ENCODE measurements at regions of chr11 and their contacts with region 1.

Region 1: DNA sequence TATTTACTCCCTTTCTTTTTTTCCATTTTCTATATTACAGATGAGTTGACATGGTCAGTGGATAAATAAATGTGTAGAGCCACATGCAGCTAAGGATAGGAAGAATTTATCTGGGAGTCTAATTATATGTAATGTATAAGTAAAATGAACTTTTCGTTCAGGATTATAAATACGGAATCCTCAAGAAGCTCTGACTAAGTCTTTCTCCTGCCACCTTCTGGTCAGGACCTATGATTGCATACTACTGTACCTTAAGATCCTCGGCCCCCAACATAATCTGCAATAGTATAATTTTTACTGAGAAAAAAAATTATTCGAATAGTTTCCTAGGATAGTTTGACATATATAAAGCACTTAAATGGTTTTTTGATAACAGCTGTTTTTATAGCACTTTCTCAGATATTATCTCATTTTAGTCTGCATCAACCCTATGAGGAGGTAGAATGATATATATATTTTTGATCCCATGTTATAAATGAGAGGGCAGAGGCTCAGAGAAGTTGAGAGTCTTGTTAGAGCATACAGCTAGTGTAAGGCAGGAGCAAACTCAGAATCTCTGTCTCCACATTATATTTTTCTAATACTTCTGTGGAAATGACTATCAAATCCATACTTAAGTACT is 36.1 kb downstream of the CCDC90B start:
- DNase-seq: peak in 4 of 9 experiments; percentile 11 to 72 (median 40)
- ATAC-seq: peak; percentile 76
- H3K4me3 ChIP-seq: no peak overlapping the region
- H3K4me3 Mint-ChIP-seq: no peak overlapping the region
- H3K27ac ChIP-seq: no peak overlapping the region
- H3K27ac Mint-ChIP-seq: no peak overlapping the region
- H3K4me1 ChIP-seq: no peaks in the 10 kb centered on the region
- H3K4me1 Mint-ChIP-seq: peaks cover 3% of the 10 kb centered on the region
- H3K27me3 ChIP-seq: no peaks in the 10 kb centered on the region
- H3K27me3 Mint-ChIP-seq: no peaks in the 10 kb centered on the region
- CTCF ChIP-seq: peak; percentile 86

Region 2: DNA sequence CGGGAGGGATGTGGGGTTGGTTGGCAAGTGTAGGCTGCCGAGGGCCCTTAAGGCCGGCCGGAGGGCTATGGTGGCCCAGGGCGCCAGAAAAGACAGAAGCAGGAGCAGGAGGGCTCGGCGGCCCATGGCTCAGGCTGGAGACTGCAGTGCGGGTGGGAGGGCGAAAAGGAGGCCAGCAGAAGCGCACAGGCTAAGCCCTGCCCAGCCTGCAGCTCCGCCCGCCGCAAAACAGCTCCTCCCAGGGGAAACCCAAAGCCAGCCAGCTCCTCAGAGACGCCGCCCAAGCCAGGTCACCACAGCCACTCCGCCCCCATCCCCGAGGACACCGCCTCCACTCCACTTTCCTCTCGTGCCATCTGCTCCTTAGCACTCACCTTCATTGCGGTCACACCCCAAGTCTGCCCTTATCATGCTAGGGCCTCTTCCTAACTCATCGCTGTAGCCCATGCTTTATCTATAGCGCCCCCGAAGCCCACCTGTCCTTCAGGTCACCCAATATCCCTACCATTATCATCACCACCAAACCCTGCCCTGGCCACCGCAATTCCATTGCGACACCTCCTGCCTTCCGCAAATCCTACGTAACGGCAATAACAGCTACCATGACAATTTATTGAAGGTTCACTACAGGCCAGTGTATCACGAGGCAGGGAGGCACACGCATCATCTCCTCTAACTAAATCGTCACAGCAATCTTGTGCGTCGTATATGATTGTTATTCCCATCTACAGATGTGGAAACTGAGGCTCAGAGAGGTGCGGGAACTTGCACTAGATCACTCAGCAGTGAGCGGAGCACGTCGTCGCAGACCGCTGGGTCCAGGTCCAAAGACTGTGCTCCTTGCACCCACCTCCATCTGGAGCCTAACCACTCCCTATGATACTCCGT is 349.6 kb before region 1 on chr11 and contains the start of gene PRCP:
- CTCF ChIA-PET with region 1: interaction called, 26 read pairs
- POLR2A ChIA-PET with region 1: interaction called, 4 read pairs
- intact Hi-C with region 1: loop called in 1 of 2 experiments (anchors 1 kb)
- DNase-seq: peak; percentile 84 to 96 (median 92)
- ATAC-seq: peak; percentile 69
- H3K4me3 ChIP-seq: peak within 1 kb of the TSS; percentile 76 to 93
- H3K4me3 Mint-ChIP-seq: peak within 1 kb of the TSS; percentile 99
- H3K27ac ChIP-seq: peak within 1 kb of the TSS; percentile 94 to 96
- H3K27ac Mint-ChIP-seq: peak within 1 kb of the TSS; percentile 100
- H3K4me1 ChIP-seq: peaks cover 26% of the 10 kb centered on the region
- H3K4me1 Mint-ChIP-seq: peaks cover 48% of the 10 kb centered on the region
- H3K27me3 ChIP-seq: no peaks in the 10 kb centered on the region
- H3K27me3 Mint-ChIP-seq: no peaks in the 10 kb centered on the region
- CTCF ChIP-seq: no peak
- total RNA-seq, gene PRCP: 23.9 to 27.8 TPM

Region 3: GRCh38 chr11:82988936-82989627 is 261.0 kb before region 1 on chr11:
- CTCF ChIA-PET with region 1: interaction called, 3 read pairs
- POLR2A ChIA-PET with region 1: no interaction called
- intact Hi-C with region 1: loop called in 1 of 2 experiments (anchors 5 kb)
- DNase-seq: no peak
- ATAC-seq: no peak
- H3K4me3 ChIP-seq: no peak overlapping the region
- H3K4me3 Mint-ChIP-seq: no peak overlapping the region
- H3K27ac ChIP-seq: no peak overlapping the region
- H3K27ac Mint-ChIP-seq: peak overlapping the region; percentile 8
- H3K4me1 ChIP-seq: peaks cover 3% of the 10 kb centered on the region
- H3K4me1 Mint-ChIP-seq: peaks cover 28% of the 10 kb centered on the region
- H3K27me3 ChIP-seq: no peaks in the 10 kb centered on the region
- H3K27me3 Mint-ChIP-seq: no peaks in the 10 kb centered on the region
- CTCF ChIP-seq: no peak

Region 4: DNA sequence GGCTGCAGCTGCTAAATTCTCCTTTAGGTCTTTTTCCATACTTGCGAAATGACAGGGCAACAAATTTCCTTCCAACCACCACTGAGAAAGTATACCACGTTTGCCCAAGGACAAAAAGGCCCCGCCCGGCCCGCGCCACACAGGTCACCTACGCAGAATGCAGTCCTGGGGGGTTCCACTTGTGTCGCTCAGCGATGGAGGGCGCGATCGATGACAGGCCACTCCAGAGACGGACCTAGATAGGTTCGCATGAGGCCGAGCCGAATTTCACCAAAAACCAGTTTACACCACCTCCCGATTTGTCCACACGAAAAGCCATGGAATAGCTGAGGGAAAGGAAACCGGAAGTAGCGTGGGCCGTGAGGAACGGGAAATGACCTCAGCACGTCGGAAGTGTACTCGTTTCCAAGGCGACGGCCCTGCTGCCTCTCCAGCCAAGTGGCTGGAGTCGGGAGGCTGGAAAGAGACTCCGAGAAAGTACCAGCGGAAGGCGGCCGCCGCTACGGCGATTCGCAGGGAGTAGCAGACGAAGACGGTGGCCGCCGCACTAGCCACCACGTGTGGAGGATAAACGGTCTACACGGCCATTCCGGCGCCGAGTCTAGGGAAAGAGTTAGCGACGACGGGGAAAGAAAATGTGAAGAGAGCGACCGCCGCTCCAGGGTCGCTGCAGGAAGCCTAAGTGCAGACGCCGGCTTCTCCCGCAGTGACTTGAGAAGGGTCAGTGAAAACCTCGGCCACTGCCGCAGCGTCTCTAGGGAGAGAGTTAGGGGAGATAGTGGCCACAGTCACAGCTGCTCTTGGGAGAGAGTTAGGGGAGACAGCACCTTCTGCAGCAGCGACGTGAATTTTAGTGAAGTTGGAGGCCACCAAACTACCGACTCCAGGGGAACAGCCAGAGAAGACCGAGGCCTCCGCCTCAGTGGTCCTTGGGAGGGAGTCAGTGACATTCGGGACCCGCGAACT is 56.5 kb before region 1 on chr11 and contains the start of gene ANKRD42:
- CTCF ChIA-PET with region 1: interaction called, 7 read pairs
- POLR2A ChIA-PET with region 1: interaction called, 3 read pairs
- intact Hi-C with region 1: loop called in 1 of 2 experiments (anchors 2 kb)
- DNase-seq: peak; percentile 53 to 96 (median 86)
- ATAC-seq: peak; percentile 67
- H3K4me3 ChIP-seq: peak within 1 kb of the TSS; percentile 70 to 94
- H3K4me3 Mint-ChIP-seq: peak within 1 kb of the TSS; percentile 100
- H3K27ac ChIP-seq: peak within 1 kb of the TSS; percentile 97 to 98
- H3K27ac Mint-ChIP-seq: peak within 1 kb of the TSS; percentile 100
- H3K4me1 ChIP-seq: peaks cover 30% of the 10 kb centered on the region
- H3K4me1 Mint-ChIP-seq: peaks cover 50% of the 10 kb centered on the region
- H3K27me3 ChIP-seq: no peaks in the 10 kb centered on the region
- H3K27me3 Mint-ChIP-seq: no peaks in the 10 kb centered on the region
- CTCF ChIP-seq: no peak
- total RNA-seq, gene ANKRD42: 11.4 to 12.7 TPM

Region 5: GRCh38 chr11:83336993-83337392 is 86.9 kb after region 1 on chr11:
- CTCF ChIA-PET with region 1: no interaction called
- POLR2A ChIA-PET with region 1: no interaction called
- intact Hi-C with region 1: no loop called
- DNase-seq: no peak
- ATAC-seq: no peak
- H3K4me3 ChIP-seq: no peak overlapping the region
- H3K4me3 Mint-ChIP-seq: no peak overlapping the region
- H3K27ac ChIP-seq: no peak overlapping the region
- H3K27ac Mint-ChIP-seq: no peak overlapping the region
- H3K4me1 ChIP-seq: no peaks in the 10 kb centered on the region
- H3K4me1 Mint-ChIP-seq: no peaks in the 10 kb centered on the region
- H3K27me3 ChIP-seq: no peaks in the 10 kb centered on the region
- H3K27me3 Mint-ChIP-seq: peaks cover 4% of the 10 kb centered on the region
- CTCF ChIP-seq: no peak